A549 (cell line): ENCODE measurements at regions of chr20 and their contacts with region 1.

Region 1: DNA sequence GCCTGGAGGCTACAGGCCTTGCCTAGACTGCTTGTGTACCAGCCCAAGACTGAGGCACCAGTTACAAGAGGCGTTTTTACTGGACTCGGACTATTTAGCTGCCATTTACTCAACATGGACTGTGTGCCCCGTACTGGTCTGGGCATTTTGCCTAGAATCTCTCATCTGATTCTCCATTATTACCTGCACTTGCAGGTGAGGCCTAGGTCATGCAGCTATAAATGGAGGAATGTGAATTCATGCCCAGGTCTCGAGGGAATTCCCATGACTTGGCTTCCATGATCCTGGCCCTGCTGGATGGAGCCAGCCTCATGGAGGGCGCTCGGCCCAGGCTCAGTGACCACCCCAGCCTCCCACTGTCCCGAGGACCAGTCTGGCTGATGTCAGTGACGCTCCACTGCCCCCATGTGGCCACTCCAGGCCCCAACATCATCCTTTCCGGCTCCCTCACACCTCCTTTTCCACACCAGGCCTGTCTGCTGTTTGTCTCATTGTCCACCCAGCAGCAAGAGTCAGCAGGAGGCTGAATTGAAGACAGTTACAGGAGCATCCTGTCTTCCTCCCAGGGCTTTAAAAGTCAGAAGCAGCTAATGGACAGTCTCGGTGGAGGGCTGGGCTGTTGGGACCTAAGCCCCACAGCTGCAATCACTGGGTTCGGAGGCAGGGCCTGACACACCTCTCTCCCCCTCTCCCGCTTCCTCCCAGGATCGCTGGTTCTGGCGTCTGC is 8.7 kb downstream of the MMP24OS start:
- DNase-seq: peak; percentile 76 to 81
- ATAC-seq: peak; percentile 81 to 84
- H3K4me3 ChIP-seq: no peak overlapping the region
- H3K27ac ChIP-seq: peak overlapping the region; percentile 49 to 97
- H3K4me1 ChIP-seq: peaks cover 71% of the 10 kb centered on the region
- CTCF ChIP-seq: peak; percentile 89
- EP300 ChIP-seq: no peak
- POLR2A ChIP-seq: no peak
- RAD21 ChIP-seq: peak; percentile 96

Region 2: DNA sequence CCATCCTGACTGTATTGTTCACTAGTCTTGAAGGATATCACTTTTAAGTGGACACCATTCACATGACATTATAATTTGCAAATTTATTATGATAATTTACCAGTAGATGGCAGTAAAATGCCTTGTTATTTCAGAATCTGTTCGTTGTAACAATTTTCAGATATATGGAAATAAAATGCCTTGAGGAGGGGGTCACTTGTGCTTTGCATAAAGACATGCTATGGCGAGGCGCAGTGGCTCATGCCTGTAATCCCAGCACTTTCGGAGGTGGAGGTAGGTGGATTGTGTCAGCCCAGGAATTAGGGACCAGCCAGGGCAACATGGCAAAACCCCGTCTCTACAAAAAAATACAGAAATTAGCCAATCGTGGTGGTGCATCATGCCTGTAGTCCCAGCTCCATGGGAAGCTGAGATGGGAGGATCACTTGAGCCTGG is 434.7 kb before region 1 on chr20:
- CTCF ChIA-PET with region 1: interaction called, 15 read pairs
- POLR2A ChIA-PET with region 1: no interaction called
- DNase-seq: peak; percentile 36 to 46
- ATAC-seq: peak; percentile 81 to 83
- H3K4me3 ChIP-seq: peak overlapping the region; percentile 28; the same call in 1 of the 3 replicates
- H3K27ac ChIP-seq: peak overlapping the region in 1 of 2 experiments; percentile 69; a peak in 2 of 6 replicates
- H3K4me1 ChIP-seq: no peaks in the 10 kb centered on the region
- CTCF ChIP-seq: peak; percentile 67
- EP300 ChIP-seq: no peak
- POLR2A ChIP-seq: no peak
- RAD21 ChIP-seq: peak; percentile 70 to 80

Region 3: DNA sequence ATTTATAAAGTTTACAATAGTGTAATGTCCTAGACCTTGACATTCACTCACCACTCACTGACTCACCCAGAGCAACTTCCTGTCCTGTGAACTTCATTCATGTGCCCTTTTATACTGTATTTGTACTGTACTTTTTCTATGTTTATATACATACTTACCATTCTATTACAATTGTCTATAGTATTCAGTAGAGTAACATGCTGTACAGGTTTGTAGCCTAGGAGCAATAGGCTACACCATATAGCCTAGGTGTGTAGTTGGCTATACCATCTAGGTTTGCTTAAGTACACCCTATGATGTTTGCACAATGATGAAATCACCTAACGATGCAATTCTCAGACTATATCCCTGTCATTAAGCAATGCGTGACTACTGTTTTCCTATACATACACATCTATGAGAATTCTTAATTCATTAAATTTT is 139.6 kb before region 1 on chr20:
- CTCF ChIA-PET with region 1: interaction called, 10 read pairs
- POLR2A ChIA-PET with region 1: no interaction called
- DNase-seq: peak in 1 of 2 experiments; percentile 56
- ATAC-seq: peak in 1 of 2 experiments; percentile 78; a peak in 3 of 6 replicates
- H3K4me3 ChIP-seq: no peak overlapping the region
- H3K27ac ChIP-seq: peak overlapping the region; percentile 52 to 70
- H3K4me1 ChIP-seq: peaks cover 28% of the 10 kb centered on the region
- CTCF ChIP-seq: no peak
- EP300 ChIP-seq: no peak
- POLR2A ChIP-seq: no peak
- RAD21 ChIP-seq: no peak

Region 4: GRCh38 chr20:35207950-35208611 is 61.1 kb before region 1 on chr20:
- CTCF ChIA-PET with region 1: interaction called, 83 read pairs
- POLR2A ChIA-PET with region 1: interaction called, 3 read pairs
- DNase-seq: peak; percentile 53 to 91
- ATAC-seq: peak; percentile 95 to 96
- H3K4me3 ChIP-seq: no peak overlapping the region
- H3K27ac ChIP-seq: peak overlapping the region; percentile 75 to 91
- H3K4me1 ChIP-seq: peaks cover 29% of the 10 kb centered on the region
- CTCF ChIP-seq: peak; percentile 91
- EP300 ChIP-seq: no peak; a peak in 1 of 5 replicates
- POLR2A ChIP-seq: no peak
- RAD21 ChIP-seq: peak; percentile 93 to 98

Region 5: DNA sequence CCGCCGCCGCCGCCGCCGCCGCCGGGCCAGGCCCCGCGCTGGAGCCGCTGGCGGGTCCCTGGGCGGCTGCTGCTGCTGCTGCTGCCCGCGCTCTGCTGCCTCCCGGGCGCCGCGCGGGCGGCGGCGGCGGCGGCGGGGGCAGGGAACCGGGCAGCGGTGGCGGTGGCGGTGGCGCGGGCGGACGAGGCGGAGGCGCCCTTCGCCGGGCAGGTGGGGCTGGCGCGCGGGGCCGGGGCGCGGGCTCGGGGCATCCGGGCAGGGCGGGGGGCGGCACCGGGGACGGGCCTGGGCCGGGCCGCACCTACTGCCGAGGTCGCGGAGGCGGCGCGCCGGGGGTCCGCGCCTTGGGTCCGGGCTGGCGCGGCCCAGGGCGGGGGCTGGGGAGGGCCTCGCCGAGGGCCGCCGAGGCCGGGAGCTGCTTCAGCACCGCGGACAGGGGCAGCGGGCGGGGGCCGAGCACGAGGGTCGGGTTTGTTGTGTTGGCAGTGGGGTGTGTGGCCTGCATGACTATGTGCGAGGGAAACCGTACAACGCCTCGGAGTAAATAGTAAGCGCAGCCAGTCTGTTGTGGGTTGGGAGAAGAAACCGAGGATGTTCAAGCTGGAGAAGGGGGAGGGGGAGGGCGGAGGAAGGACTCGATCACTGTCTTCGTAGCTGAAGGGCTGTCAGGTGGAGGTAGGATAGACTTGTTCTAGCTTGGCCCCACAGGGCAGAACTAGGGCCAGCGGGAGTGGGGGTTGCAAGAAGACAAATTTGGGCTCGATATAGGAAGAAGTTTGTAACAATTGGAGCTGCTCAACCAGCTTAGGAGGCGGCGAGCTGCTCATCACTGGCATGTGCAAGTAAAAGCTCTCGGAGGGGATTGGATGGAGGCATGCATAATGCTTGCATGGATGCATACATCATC is 42.2 kb before region 1 on chr20:
- CTCF ChIA-PET with region 1: interaction called, 18 read pairs
- POLR2A ChIA-PET with region 1: no interaction called
- DNase-seq: peak; percentile 49 to 50
- ATAC-seq: peak; percentile 84 to 92
- H3K4me3 ChIP-seq: peak overlapping the region; percentile 65
- H3K27ac ChIP-seq: peak overlapping the region; percentile 61 to 93; a peak in 5 of 6 replicates
- H3K4me1 ChIP-seq: peaks cover 18% of the 10 kb centered on the region; the same call in 2 of the 3 replicates
- CTCF ChIP-seq: no peak
- EP300 ChIP-seq: no peak
- POLR2A ChIP-seq: no peak
- RAD21 ChIP-seq: 0 out of 5 replicates have a peak, but pooled peaks of 1 of the 2 experiments have one; percentile 15

Region 6: GRCh38 chr20:35284267-35284991 is 15.2 kb after region 1 on chr20 and contains the start of gene EIF6:
- CTCF ChIA-PET with region 1: interaction called, 39 read pairs
- POLR2A ChIA-PET with region 1: interaction called, 3 read pairs
- DNase-seq: peak; percentile 90 to 91
- ATAC-seq: peak; percentile 91 to 93
- H3K4me3 ChIP-seq: peak within 1 kb of the TSS; percentile 91
- H3K27ac ChIP-seq: peak within 1 kb of the TSS; percentile 82 to 98
- H3K4me1 ChIP-seq: peaks cover 27% of the 10 kb centered on the region
- CTCF ChIP-seq: no peak; the same call in 2 of the 3 replicates
- EP300 ChIP-seq: no peak
- POLR2A ChIP-seq: peak; percentile 53
- RAD21 ChIP-seq: no peak
- polyA plus RNA-seq, gene EIF6: 184 and 204 TPM in 2 replicates